HEK293 (cell line): ENCODE measurements at regions of chr1 and their contacts with region 1.

Region 1: GRCh38 chr1:221729771-221730330 is 12.0 kb downstream of the DUSP10 start:
- H3K4me3 ChIP-seq: no peak overlapping the region
- H3K27ac ChIP-seq: no peak overlapping the region
- H3K4me1 ChIP-seq: peaks cover 3% of the 10 kb centered on the region; the same call in 1 of the 2 replicates
- CTCF ChIP-seq: no peak

Region 2: GRCh38 chr1:221708987-221709386 is 20.9 kb before region 1 on chr1:
- CTCF ChIA-PET with region 1: no interaction called
- POLR2A ChIA-PET with region 1: interaction called, 16 read pairs
- H3K4me3 ChIP-seq: no peak overlapping the region
- H3K27ac ChIP-seq: no peak overlapping the region
- H3K4me1 ChIP-seq: peaks cover 2% of the 10 kb centered on the region; the same call in 1 of the 2 replicates
- CTCF ChIP-seq: no peak